ENCODE measurements at regions of chr6 and their contacts with region 1.

Region 1: DNA sequence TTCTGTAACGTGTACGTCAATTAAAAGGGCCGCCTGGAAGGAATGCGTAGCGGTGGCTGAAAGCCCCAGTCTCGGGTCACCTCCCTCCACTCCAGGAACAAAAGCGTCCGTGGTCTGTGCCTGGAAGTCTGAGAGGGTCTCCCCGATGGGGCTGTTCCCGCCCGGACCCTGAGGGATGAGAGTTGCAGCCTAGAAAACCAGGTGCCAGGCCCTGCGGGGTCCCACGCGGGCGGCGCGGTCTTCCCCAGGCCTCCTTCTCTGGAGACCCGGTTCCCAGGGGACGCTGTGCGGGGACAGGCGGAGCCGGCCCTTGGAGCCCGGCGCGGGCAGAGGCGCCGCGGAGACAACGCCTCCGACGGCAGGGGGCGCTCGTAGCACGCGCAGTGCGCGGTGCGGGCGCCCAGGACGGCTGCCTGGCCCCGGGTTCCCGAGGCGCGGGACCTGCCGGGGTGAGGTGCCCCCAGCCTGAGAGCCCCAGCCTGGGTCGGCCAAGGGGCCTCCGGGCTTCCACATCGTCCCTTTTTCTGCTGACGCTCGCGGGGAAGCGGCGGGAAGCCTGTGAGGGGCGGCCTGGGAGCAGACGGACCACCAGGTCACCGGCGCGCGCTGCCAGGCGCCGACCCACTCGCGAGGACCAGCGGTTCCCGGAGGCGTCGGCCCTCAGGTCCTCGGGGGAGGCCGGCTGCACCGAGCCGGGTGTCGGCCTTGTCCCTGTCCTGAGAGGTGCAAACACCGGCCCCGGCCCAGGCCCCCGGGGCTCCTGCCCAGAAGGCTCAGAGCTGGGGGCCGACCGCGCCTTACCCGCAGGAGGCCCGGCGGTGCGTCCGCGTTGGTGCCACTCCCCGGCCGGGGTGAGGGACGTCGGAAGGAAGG is 5.3 kb upstream of the FOXC1 start:
- DNase-seq: no peak
- ATAC-seq: peak; percentile 95
- H3K4me3 ChIP-seq: peak overlapping the region; percentile 37 to 49
- H3K27ac ChIP-seq: no peak overlapping the region
- H3K4me1 ChIP-seq: peaks cover 5% of the 10 kb centered on the region
- H3K27me3 ChIP-seq: peaks cover 3% of the 10 kb centered on the region; the same call in 1 of the 2 replicates
- CTCF ChIP-seq: peak; percentile 99

Region 2: DNA sequence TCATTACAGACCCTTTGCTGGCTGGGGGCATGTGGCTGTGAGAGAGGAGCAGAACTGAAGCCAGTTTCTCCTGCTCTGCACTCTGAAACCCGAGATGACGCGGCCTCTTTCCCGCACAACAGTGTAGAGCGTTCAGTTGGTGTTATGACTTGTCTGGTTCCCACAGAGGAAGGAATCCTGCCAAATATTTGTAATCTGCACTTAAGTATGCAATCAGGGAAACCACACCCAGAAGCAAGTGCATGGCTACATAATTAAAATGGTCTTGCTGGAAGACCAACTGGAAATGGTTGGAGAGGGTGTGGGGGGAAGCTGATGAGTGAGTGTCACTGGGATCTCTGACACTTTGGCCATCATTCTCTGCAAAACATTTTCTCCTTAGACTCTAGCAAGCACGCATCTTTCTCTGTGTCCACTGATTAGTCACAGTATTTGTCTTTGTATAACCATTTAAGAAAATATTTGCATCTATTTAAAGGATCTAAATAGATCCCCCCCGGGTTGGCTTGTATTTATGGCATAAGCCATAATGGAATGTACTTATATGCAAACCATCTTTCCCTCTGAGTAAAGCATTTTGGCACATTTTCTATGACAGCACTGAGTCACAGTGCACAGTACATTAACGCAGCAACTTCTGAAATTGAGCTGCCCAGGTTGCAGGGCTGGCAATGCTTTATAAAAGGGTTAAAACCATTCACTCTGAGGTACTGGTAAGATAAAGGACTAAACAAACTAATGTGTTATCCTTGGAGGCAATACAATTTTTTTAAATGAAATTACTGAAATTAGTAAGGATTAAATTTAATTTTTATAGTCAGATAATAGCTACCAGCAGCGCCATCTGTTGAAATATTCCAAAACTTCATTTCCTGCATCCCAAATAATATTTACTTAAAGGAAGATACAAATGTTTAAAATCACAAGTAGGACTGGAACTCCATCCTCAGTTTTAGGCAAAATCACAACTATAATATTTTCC is 82.0 kb after region 1 on chr6:
- CTCF ChIA-PET with region 1: no interaction called
- POLR2A ChIA-PET with region 1: interaction called, 3 read pairs
- in situ Hi-C with region 1: no loop called
- intact Hi-C with region 1: loop called (anchors 5 kb)
- DNase-seq: peak; percentile 28
- ATAC-seq: no peak
- H3K4me3 ChIP-seq: no peak overlapping the region
- H3K27ac ChIP-seq: no peak overlapping the region
- H3K4me1 ChIP-seq: no peaks in the 10 kb centered on the region
- H3K27me3 ChIP-seq: no peaks in the 10 kb centered on the region
- CTCF ChIP-seq: no peak; the same call in none of the 2 replicates

Region 3: DNA sequence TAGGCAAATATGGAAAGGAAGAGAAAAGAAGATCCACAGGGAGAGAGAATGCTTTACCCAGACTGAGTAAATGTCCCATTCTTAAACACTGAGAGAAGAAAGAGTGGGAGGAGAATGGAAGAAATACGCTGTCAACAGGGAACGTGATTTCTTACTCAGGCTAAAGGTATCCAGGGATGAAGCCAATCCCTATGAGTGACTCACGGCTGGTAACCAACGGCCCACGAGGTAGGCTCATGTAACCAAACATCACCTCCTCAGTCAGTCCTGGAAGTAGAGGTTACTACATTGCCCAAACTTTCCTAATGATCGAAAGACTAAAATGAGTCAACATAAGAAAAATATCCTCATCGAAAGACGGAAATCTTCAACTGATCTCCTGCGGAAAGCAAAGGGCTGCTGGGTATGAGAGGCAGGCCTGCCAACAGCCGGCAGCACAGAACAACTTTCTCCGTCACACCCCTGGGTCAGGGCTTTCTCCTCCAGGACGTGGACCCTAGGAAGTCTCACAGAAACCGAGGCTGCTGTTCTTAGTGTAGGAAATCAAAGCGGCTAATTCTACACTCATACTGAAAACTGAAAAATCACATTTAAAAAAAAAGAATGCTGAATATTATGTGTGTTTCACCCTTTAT is 348.4 kb after region 1 on chr6:
- CTCF ChIA-PET with region 1: no interaction called
- POLR2A ChIA-PET with region 1: no interaction called
- in situ Hi-C with region 1: no loop called
- intact Hi-C with region 1: no loop called
- DNase-seq: peak; percentile 78
- ATAC-seq: peak; percentile 75; the same call in 1 of the 2 replicates
- H3K4me3 ChIP-seq: no peak overlapping the region
- H3K27ac ChIP-seq: no peak overlapping the region
- H3K4me1 ChIP-seq: no peaks in the 10 kb centered on the region
- H3K27me3 ChIP-seq: no peaks in the 10 kb centered on the region
- CTCF ChIP-seq: no peak

Region 4: DNA sequence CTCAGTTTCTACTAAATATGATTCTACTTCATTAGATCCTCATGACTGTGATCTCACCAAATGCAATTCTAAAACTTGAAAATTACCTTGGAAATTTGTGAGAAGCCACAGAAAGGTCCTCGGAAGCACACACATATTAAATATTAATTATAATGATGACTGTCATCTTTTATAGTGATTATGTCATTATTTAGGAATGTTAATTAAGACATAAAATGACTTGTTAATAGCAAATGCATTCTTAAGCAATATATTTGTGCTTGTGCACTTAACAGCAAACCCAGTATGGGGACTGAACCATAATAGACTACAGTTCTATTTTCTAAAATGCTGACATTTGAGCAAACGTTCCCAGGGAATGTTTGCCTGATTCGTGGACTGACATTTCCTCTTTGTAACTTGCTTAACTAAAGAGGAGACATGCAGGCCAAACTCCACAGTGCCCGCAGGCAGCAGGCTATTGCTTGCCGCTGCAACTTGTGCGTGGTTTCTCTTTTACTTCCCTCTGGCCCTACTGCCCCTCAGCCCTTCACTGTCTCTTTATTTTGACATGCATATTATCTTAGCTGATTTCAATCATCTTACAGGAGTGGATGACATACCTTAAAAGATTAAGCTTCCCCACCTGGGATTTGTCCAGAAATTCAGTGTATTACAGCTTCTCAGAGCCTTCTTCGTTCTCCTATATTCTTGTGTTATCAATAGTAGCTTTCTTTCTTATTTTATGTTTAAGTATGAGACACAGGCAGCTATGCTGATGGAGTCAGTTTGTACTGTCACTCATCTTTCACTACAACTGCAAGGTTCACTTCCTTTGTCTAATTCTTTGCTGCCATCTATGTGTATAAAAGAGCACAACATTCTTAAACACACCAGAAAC is 499.5 kb after region 1 on chr6:
- CTCF ChIA-PET with region 1: interaction called, 4 read pairs
- POLR2A ChIA-PET with region 1: no interaction called
- in situ Hi-C with region 1: no loop called
- intact Hi-C with region 1: loop called (anchors 5 kb)
- DNase-seq: peak; percentile 54
- ATAC-seq: peak; percentile 95
- H3K4me3 ChIP-seq: no peak overlapping the region
- H3K27ac ChIP-seq: no peak overlapping the region
- H3K4me1 ChIP-seq: peaks cover 3% of the 10 kb centered on the region; the same call in 1 of the 2 replicates
- H3K27me3 ChIP-seq: no peaks in the 10 kb centered on the region
- CTCF ChIP-seq: peak; percentile 65; the same call in 1 of the 2 replicates

Region 5: GRCh38 chr6:2196079-2196679 is 591.8 kb after region 1 on chr6:
- CTCF ChIA-PET with region 1: interaction called, 3 read pairs
- POLR2A ChIA-PET with region 1: interaction called, 5 read pairs
- in situ Hi-C with region 1: no loop called
- intact Hi-C with region 1: loop called (anchors 1 kb)
- DNase-seq: peak; percentile 48
- ATAC-seq: peak; percentile 82
- H3K4me3 ChIP-seq: no peak overlapping the region
- H3K27ac ChIP-seq: no peak overlapping the region
- H3K4me1 ChIP-seq: peaks cover 3% of the 10 kb centered on the region; the same call in 1 of the 2 replicates
- H3K27me3 ChIP-seq: no peaks in the 10 kb centered on the region
- CTCF ChIP-seq: peak; percentile 74; the same call in 1 of the 2 replicates